Ovary (tissue), 10 donors: ENCODE measurements at regions of chr4 and their contacts with region 1.

Region 1: GRCh38 chr4:109424093-109424841 is 9.3 kb upstream of the SEC24B start:
- DNase-seq: no peak
- H3K4me3 ChIP-seq: no peak overlapping the region
- H3K27ac ChIP-seq: no peak overlapping the region
- H3K4me1 ChIP-seq: no peaks in the 10 kb centered on the region
- H3K27me3 ChIP-seq: no peaks in the 10 kb centered on the region
- CTCF ChIP-seq: no peak
- EP300 ChIP-seq: no peak
- POLR2A ChIP-seq: no peak

Region 2: DNA sequence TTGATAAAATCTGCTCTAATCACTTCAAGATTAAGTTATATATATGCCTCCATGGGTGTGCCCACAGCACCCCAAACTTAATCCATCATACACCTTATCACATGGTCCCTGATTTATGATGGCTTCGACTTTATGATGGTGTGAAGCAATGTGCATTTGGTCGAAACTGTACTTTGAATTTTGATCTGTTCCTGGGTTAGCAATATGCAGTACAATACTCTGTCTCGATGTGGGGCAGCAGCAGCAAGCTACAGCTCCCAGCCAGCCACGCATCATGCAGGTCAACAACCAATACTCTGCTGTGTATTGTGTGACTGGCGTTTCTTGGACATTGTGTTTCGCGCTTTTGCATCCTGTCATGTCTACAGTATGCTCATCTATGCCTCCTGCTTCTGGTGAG is 198.4 kb after region 1 on chr4:
- intact Hi-C with region 1: no loop called
- DNase-seq: no peak
- H3K4me3 ChIP-seq: no peak overlapping the region
- H3K27ac ChIP-seq: no peak overlapping the region
- H3K4me1 ChIP-seq: no peaks in the 10 kb centered on the region
- H3K27me3 ChIP-seq: no peaks in the 10 kb centered on the region
- CTCF ChIP-seq: no peak
- EP300 ChIP-seq: no peak
- POLR2A ChIP-seq: no peak

Region 3: GRCh38 chr4:109820563-109820962 is 396.3 kb after region 1 on chr4:
- intact Hi-C with region 1: loop called (anchors 5 kb)
- DNase-seq: no peak
- H3K4me3 ChIP-seq: no peak overlapping the region
- H3K27ac ChIP-seq: no peak overlapping the region
- H3K4me1 ChIP-seq: peaks cover 4% of the 10 kb centered on the region
- H3K27me3 ChIP-seq: no peaks in the 10 kb centered on the region
- CTCF ChIP-seq: no peak
- EP300 ChIP-seq: no peak
- POLR2A ChIP-seq: no peak

Region 4: GRCh38 chr4:109826719-109827118 is 402.5 kb after region 1 on chr4:
- intact Hi-C with region 1: loop called (anchors 5 kb)
- DNase-seq: no peak
- H3K4me3 ChIP-seq: no peak overlapping the region
- H3K27ac ChIP-seq: no peak overlapping the region
- H3K4me1 ChIP-seq: no peaks in the 10 kb centered on the region
- H3K27me3 ChIP-seq: no peaks in the 10 kb centered on the region
- CTCF ChIP-seq: peak in 2 of 3 donors; percentile 36 to 48
- EP300 ChIP-seq: no peak
- POLR2A ChIP-seq: no peak

Region 5: GRCh38 chr4:109977854-109978501 is 553.7 kb after region 1 on chr4:
- intact Hi-C with region 1: loop called (anchors 5 to 10 kb)
- DNase-seq: no peak
- H3K4me3 ChIP-seq: no peak overlapping the region
- H3K27ac ChIP-seq: no peak overlapping the region
- H3K4me1 ChIP-seq: no peaks in the 10 kb centered on the region
- H3K27me3 ChIP-seq: no peaks in the 10 kb centered on the region
- CTCF ChIP-seq: peak in 1 of 3 donors; percentile 32
- EP300 ChIP-seq: no peak
- POLR2A ChIP-seq: no peak